CD14-positive monocyte (primary cell): ENCODE measurements at regions of chr17 and their contacts with region 1.

Region 1: GRCh38 chr17:42287926-42288802 is at the start of gene STAT5A:
- DNase-seq: peak; percentile 78 to 88 (median 81)
- H3K4me3 ChIP-seq: peak within 1 kb of the TSS; percentile 53 to 89 (median 87)
- H3K4me3 Mint-ChIP-seq: peak within 1 kb of the TSS; percentile 92 to 95
- H3K27ac ChIP-seq: peak within 1 kb of the TSS; percentile 81 to 84
- H3K27ac Mint-ChIP-seq: peak within 1 kb of the TSS; percentile 91 to 97 (median 95)
- H3K4me1 ChIP-seq: peaks cover 47 to 59% of the 10 kb centered on the region in 2 donors
- H3K4me1 Mint-ChIP-seq: peaks cover 58% of the 10 kb centered on the region
- H3K27me3 ChIP-seq: no peaks in the 10 kb centered on the region
- H3K27me3 Mint-ChIP-seq: peaks cover 0 to 3% (median 0%) of the 10 kb centered on the region in 3 donors
- CTCF ChIP-seq: no peak
- polyA plus RNA-seq, gene STAT5A: 30.5 to 91.1 (median 49.8) TPM

Region 2: DNA sequence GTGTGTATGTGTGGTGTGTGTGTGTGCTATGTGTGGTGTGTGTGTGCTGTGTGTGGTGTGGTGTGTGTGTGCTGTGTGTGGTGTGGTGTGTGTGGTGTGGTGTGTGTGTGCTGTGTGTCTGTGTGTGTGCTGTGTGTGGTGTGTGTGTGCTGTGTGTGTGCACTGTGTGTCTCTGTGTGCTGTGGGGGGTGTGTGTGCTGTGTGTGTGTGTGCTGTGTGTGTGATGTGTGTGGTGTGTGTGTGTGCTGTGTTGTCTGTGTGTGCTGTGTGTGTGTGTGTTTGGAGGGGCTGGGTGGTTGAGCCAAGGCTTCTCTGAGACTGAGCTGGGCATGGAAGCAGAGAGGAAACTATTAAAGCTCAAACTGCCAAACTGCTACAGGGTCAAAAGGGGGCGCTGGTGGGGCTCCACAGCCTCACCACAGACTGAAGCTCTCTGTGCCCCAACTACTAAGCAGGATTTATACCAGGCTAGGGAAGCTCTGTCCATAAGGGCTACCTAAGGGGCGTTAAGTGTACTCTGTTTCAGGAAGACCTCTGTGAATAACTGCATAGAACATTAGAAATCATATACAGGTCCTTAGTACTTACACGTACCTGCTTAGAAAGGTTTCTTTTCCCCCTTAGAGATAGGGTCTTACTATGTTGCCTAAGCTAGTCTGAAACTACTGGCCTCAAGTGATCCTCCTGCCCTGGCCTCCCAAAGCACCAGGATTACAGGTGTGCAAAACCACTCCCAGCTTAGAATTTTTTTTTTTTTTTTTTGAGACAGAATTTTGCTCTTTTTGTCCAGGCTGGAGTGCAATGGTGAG is 66.0 kb before region 1 on chr17:
- intact Hi-C with region 1: loop called in 1 of 2 experiments (anchors 5 kb)
- DNase-seq: peak; percentile 49 to 64 (median 57)
- H3K4me3 ChIP-seq: no peak overlapping the region
- H3K4me3 Mint-ChIP-seq: no peak overlapping the region
- H3K27ac ChIP-seq: peak overlapping the region in 1 of 2 donors; percentile 57
- H3K27ac Mint-ChIP-seq: peak overlapping the region in 6 of 7 donors; percentile 1 to 90 (median 70)
- H3K4me1 ChIP-seq: peaks cover 13 to 16% of the 10 kb centered on the region in 2 donors
- H3K4me1 Mint-ChIP-seq: peaks cover 15% of the 10 kb centered on the region
- H3K27me3 ChIP-seq: no peaks in the 10 kb centered on the region
- H3K27me3 Mint-ChIP-seq: no peaks in the 10 kb centered on the region
- CTCF ChIP-seq: peak; percentile 68

Region 3: DNA sequence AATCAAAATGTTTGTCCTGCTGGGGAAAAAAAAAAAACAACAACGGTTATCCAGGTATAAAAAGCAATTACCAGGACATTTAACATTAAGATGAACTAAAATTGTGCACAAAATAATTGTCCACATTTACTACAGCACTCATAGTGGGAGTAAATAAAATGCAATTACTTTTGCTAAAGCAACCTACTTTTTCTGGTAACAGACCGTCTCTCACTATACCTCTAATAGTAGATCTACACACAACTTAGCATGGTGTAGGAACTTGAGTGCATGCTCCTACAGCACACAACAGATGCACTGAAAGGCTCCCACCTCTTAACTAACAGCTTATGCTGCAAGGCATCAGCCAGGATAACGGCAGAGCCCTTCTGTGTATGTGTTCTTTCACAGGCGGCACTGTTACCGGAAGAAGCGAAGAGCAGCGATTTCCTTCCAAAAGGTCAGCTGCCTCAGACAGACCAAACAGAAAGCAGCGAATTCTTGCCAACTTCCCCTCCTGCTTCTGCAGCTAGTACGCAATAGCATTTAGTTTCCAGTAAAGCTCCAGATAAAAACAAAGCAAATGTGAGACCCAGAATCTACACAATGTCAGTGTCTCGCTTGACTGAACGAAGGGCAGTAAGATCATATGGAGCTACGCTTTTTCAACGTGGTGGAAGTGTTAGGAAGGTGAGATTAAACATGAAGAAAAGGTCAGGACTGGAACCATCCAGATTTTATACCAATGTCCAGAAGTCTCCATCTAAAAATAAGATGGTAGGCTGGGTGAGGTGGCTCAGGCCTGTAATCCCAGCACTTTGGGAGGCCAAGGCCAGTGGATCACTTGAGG is 39.6 kb before region 1 on chr17:
- intact Hi-C with region 1: loop called (anchors 5 kb)
- DNase-seq: peak; percentile 81 to 91 (median 86)
- H3K4me3 ChIP-seq: peak overlapping the region; percentile 8 to 78 (median 71)
- H3K4me3 Mint-ChIP-seq: peak overlapping the region; percentile 70 to 88
- H3K27ac ChIP-seq: peak overlapping the region; percentile 80 to 92
- H3K27ac Mint-ChIP-seq: peak overlapping the region; percentile 92 to 98 (median 97)
- H3K4me1 ChIP-seq: peaks cover 29 to 42% of the 10 kb centered on the region in 2 donors
- H3K4me1 Mint-ChIP-seq: peaks cover 55% of the 10 kb centered on the region
- H3K27me3 ChIP-seq: no peaks in the 10 kb centered on the region
- H3K27me3 Mint-ChIP-seq: peaks cover 0 to 2% (median 0%) of the 10 kb centered on the region in 3 donors
- CTCF ChIP-seq: no peak

Region 4: GRCh38 chr17:42273474-42274272 is 14.5 kb before region 1 on chr17:
- intact Hi-C with region 1: loop called in 1 of 2 experiments (anchors 2 kb)
- DNase-seq: peak in 2 of 3 donors; percentile 27 to 59
- H3K4me3 ChIP-seq: peak overlapping the region in 1 of 3 experiments; percentile 94
- H3K4me3 Mint-ChIP-seq: peak overlapping the region in 1 of 2 donors; percentile 100
- H3K27ac ChIP-seq: peak overlapping the region in 1 of 2 donors; percentile 91
- H3K27ac Mint-ChIP-seq: peak overlapping the region; percentile 71 to 91 (median 84)
- H3K4me1 ChIP-seq: peaks cover 48 to 55% of the 10 kb centered on the region in 2 donors
- H3K4me1 Mint-ChIP-seq: peaks cover 57% of the 10 kb centered on the region
- H3K27me3 ChIP-seq: no peaks in the 10 kb centered on the region
- H3K27me3 Mint-ChIP-seq: peaks cover 0 to 3% (median 0%) of the 10 kb centered on the region in 3 donors
- CTCF ChIP-seq: no peak

Region 5: DNA sequence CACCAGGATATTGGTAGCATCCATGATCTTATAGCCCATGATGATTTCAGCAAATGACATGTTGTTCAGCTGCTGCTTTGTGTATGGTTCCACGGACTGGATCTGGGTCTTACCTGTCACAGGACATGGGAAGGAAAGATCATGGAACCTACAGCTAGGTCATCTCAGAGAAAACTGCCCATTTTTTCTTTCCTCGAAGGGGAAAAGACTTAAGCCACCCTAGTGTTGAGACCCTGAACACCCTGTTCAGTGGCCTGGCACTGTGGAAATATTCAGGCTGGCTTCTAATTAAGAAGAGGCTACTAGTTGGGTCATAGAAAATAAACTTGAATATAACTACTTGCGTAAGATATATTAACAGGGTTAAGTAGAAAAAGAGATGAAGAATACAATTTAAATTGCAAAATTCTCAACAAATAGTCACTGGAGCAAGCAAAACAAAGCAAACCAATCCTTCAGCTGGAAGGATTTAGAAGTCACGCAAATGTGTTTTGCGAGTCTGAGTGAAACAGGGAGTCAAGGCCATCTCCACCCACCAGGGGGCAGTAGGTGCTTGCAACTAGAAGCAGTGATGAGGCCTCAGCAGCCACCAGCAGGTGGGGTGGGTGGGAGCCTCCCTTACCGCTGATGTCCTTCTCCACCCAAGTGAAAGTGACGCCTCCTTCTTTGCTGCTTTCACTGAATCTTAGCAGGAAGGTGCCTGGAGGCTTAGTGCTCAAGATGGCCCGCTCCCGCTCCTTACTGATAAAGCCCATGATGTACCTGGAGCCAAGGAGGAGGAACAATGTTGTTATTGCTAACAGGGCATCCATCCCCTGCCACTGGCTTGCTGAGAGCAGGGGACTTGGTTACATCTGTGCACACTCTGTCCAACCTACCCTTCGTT is 34.5 kb after region 1 on chr17:
- intact Hi-C with region 1: no loop called
- DNase-seq: peak; percentile 85 to 89 (median 89)
- H3K4me3 ChIP-seq: no peak overlapping the region
- H3K4me3 Mint-ChIP-seq: no peak overlapping the region
- H3K27ac ChIP-seq: no peak overlapping the region
- H3K27ac Mint-ChIP-seq: peak overlapping the region in 5 of 7 donors; percentile 28 to 61 (median 41)
- H3K4me1 ChIP-seq: peaks cover 3 to 6% of the 10 kb centered on the region in 2 donors
- H3K4me1 Mint-ChIP-seq: peaks cover 17% of the 10 kb centered on the region
- H3K27me3 ChIP-seq: no peaks in the 10 kb centered on the region
- H3K27me3 Mint-ChIP-seq: peaks cover 0 to 2% (median 0%) of the 10 kb centered on the region in 3 donors
- CTCF ChIP-seq: peak; percentile 100